Heart right ventricle (tissue), 16 donors: ENCODE measurements at regions of chr13 and their contacts with region 1.

Region 1: GRCh38 chr13:44322928-44323327 is 50.7 kb upstream of the SERP2 start:
- DNase-seq: no peak
- ATAC-seq: no peak
- H3K4me3 ChIP-seq: no peak overlapping the region
- H3K27ac ChIP-seq: no peak overlapping the region
- H3K4me1 ChIP-seq: peaks cover 0 to 4% (median 0%) of the 10 kb centered on the region in 9 donors
- H3K27me3 ChIP-seq: no peaks in the 10 kb centered on the region
- CTCF ChIP-seq: no peak

Region 2: GRCh38 chr13:44141725-44142539 is 181.0 kb before region 1 on chr13:
- intact Hi-C with region 1: no loop called
- DNase-seq: peak; percentile 98 to 99
- ATAC-seq: peak; percentile 99 to 100 (median 100)
- H3K4me3 ChIP-seq: peak overlapping the region; percentile 50 to 79 (median 58)
- H3K27ac ChIP-seq: peak overlapping the region; percentile 91 to 99 (median 96)
- H3K4me1 ChIP-seq: peaks cover 5 to 22% (median 10%) of the 10 kb centered on the region in 9 donors
- H3K27me3 ChIP-seq: no peaks in the 10 kb centered on the region
- CTCF ChIP-seq: peak in 2 of 9 donors; percentile 9 to 21

Region 3: GRCh38 chr13:44355643-44356042 is 32.7 kb after region 1 on chr13:
- intact Hi-C with region 1: loop called in 1 of 10 experiments (anchors 5 kb)
- DNase-seq: no peak
- ATAC-seq: no peak
- H3K4me3 ChIP-seq: no peak overlapping the region
- H3K27ac ChIP-seq: no peak overlapping the region
- H3K4me1 ChIP-seq: peaks cover 0 to 4% (median 0%) of the 10 kb centered on the region in 9 donors
- H3K27me3 ChIP-seq: no peaks in the 10 kb centered on the region
- CTCF ChIP-seq: no peak